Activated T-helper 1 cell treated with anti-CD3 and anti-CD28 coated beads, Interleukin-12 subunit alpha, Interleukin-12 subunit beta, Interleukin-2, Interleukin-4 antibody, amounts not matched to agents 30 ng/mL and 10 ng/mL and 1 ng/mL, durations not matched to agents 14 hours and 24 hours and 36 hours (primary cell): ENCODE measurements at regions of chr12 and their contacts with region 1.

Region 1: GRCh38 chr12:6607751-6608591 is 792 bp upstream of the CHD4 start:
- DNase-seq: peak; percentile 51
- H3K4me3 Mint-ChIP-seq: no peak overlapping the region
- H3K27ac Mint-ChIP-seq: no peak overlapping the region
- H3K4me1 Mint-ChIP-seq: peaks cover 47% of the 10 kb centered on the region
- H3K27me3 Mint-ChIP-seq: no peaks in the 10 kb centered on the region

Region 2: GRCh38 chr12:6423267-6424007 is 184.5 kb before region 1 on chr12:
- intact Hi-C with region 1: loop called (anchors 2 kb)
- DNase-seq: peak; percentile 75
- H3K4me3 Mint-ChIP-seq: no peak overlapping the region
- H3K27ac Mint-ChIP-seq: peak overlapping the region; percentile 50
- H3K4me1 Mint-ChIP-seq: peaks cover 44% of the 10 kb centered on the region
- H3K27me3 Mint-ChIP-seq: peaks cover 1% of the 10 kb centered on the region

Region 3: GRCh38 chr12:6533923-6534694 is 73.9 kb before region 1 on chr12 and contains the start of gene GAPDH:
- intact Hi-C with region 1: loop called (anchors 1 kb)
- DNase-seq: peak; percentile 86
- H3K4me3 Mint-ChIP-seq: peak within 1 kb of the TSS; percentile 91
- H3K27ac Mint-ChIP-seq: peak within 1 kb of the TSS; percentile 99
- H3K4me1 Mint-ChIP-seq: peaks cover 58% of the 10 kb centered on the region
- H3K27me3 Mint-ChIP-seq: no peaks in the 10 kb centered on the region
- total RNA-seq, gene GAPDH: 4,315 and 4,318 TPM in 2 replicates

Region 4: GRCh38 chr12:6662906-6663742 is 55.2 kb after region 1 on chr12 and contains the start of gene ING4:
- intact Hi-C with region 1: loop called (anchors 1 kb)
- DNase-seq: peak; percentile 95
- H3K4me3 Mint-ChIP-seq: peak within 1 kb of the TSS; percentile 89
- H3K27ac Mint-ChIP-seq: peak within 1 kb of the TSS; percentile 91
- H3K4me1 Mint-ChIP-seq: peaks cover 30% of the 10 kb centered on the region
- H3K27me3 Mint-ChIP-seq: no peaks in the 10 kb centered on the region
- total RNA-seq, gene ING4: 14.6 and 15.0 TPM in 2 replicates

Region 5: DNA sequence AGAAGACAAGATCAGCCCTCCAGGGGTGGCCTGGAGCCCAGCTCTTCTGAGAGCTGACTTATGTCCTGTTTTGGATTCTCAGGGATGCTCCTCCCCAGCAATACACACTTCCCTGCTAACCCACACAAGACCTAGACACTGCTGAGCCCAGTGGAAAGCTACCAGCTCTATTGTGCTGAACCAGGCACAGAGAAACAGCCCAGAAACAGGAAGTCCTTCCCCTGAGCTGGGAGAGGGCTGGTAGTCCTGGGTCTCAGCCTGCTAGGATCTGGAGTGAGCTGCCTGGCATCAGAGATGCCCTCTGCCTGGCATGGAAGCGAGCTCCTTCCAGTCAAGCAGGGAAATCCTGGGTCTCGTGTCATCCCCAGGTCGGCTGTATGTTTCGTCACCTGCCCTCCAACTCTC is 163.1 kb after region 1 on chr12:
- intact Hi-C with region 1: loop called (anchors 5 kb)
- DNase-seq: no peak
- H3K4me3 Mint-ChIP-seq: peak overlapping the region; percentile 82
- H3K27ac Mint-ChIP-seq: peak overlapping the region; percentile 86
- H3K4me1 Mint-ChIP-seq: peaks cover 77% of the 10 kb centered on the region
- H3K27me3 Mint-ChIP-seq: no peaks in the 10 kb centered on the region

Region 6: DNA sequence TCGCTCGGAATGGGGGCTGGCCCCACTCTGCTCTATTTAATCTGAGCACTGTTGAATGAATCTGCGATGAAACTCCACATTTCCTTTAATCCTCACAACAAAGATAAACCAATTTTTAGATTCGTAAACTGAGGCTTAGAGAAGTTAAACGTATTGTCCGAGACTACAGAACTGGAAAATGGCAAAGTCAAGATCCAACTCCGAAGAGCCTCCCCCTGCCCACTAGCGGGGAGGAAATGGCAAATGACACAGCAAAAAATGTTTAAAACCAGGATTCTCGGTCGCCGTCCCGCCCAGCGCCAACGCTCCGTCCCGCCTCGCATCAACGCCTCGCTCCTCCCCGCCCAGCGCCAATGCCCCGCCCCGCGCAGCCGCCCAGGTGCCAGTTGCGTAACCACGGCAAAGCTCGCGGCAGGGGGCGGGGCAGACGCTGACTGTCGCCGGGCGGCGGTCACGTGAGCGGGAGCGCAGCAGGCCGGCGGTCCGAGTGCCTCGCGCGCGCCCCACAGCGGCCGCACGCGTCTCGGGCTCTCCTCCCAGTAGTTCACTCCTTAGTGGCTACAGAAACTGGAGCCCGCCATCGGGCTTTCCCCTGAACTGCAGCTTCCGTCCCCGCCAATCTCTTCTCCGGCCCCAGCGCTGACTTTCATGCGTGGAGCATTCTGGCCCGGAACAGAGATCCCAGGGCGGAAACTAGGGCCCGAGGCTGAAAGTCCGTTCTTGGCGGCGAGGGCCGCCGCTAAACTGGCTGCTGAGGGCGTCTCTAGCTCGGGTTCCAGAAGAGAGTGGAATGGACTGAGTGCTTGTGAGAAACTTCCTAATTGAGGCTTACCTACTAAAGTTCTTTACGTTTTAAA is 283.0 kb after region 1 on chr12:
- intact Hi-C with region 1: loop called (anchors 1 kb)
- DNase-seq: peak; percentile 98
- H3K4me3 Mint-ChIP-seq: peak overlapping the region; percentile 84
- H3K27ac Mint-ChIP-seq: peak overlapping the region; percentile 95
- H3K4me1 Mint-ChIP-seq: peaks cover 19% of the 10 kb centered on the region
- H3K27me3 Mint-ChIP-seq: no peaks in the 10 kb centered on the region

Region 7: GRCh38 chr12:6978609-6979011 is 370.6 kb after region 1 on chr12:
- intact Hi-C with region 1: no loop called
- DNase-seq: no peak
- H3K4me3 Mint-ChIP-seq: no peak overlapping the region
- H3K27ac Mint-ChIP-seq: peak overlapping the region; percentile 13
- H3K4me1 Mint-ChIP-seq: peaks cover 6% of the 10 kb centered on the region
- H3K27me3 Mint-ChIP-seq: no peaks in the 10 kb centered on the region

Region 8: DNA sequence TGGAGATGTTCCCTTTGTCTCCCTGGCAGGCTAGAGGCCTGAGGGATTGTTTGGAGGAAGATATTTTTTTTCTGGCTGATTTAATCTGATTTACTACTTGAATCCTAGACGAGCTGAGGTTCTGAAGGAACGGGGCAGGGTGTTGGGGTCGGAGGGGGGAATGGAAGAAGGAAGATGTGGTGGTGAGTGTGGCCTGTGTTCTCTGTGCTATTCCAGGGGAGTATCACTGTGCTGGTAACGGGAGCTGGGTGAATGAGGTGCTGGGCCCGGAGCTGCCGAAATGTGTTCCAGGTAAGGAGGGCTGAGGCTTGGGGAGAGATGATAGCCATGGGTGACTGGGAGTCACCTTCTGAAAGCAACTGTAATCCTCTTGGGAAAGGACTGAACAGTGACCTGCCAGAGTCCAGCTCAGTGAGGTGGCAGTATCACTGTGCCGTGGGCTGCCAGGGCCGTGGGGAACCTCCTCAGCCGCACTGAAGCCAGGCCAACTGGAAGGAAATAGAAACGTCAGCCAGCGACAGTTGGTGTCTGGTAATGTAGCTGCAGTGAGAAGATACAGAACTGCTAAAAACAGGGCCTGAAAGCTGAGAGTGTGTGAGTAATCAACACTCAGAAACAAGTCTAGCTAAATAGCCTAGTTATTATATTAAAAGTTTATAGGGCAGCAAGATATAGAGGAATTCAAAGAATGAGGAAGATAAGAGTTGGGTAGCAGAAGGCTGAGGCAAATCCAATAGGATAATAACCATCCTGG is 460.4 kb after region 1 on chr12:
- intact Hi-C with region 1: no loop called
- DNase-seq: no peak
- H3K4me3 Mint-ChIP-seq: no peak overlapping the region
- H3K27ac Mint-ChIP-seq: no peak overlapping the region
- H3K4me1 Mint-ChIP-seq: no peaks in the 10 kb centered on the region
- H3K27me3 Mint-ChIP-seq: peaks cover 25% of the 10 kb centered on the region